OCI-LY7 (cell line): ENCODE measurements at regions of chrX and their contacts with region 1.

Region 1: GRCh38 chrX:7083468-7084396 is 63.8 kb upstream of the STS start:
- DNase-seq: peak; percentile 90
- H3K4me3 ChIP-seq: peak overlapping the region; percentile 40
- H3K27ac ChIP-seq: peak overlapping the region; percentile 96
- H3K4me1 ChIP-seq: peaks cover 66% of the 10 kb centered on the region
- CTCF ChIP-seq: no peak

Region 2: DNA sequence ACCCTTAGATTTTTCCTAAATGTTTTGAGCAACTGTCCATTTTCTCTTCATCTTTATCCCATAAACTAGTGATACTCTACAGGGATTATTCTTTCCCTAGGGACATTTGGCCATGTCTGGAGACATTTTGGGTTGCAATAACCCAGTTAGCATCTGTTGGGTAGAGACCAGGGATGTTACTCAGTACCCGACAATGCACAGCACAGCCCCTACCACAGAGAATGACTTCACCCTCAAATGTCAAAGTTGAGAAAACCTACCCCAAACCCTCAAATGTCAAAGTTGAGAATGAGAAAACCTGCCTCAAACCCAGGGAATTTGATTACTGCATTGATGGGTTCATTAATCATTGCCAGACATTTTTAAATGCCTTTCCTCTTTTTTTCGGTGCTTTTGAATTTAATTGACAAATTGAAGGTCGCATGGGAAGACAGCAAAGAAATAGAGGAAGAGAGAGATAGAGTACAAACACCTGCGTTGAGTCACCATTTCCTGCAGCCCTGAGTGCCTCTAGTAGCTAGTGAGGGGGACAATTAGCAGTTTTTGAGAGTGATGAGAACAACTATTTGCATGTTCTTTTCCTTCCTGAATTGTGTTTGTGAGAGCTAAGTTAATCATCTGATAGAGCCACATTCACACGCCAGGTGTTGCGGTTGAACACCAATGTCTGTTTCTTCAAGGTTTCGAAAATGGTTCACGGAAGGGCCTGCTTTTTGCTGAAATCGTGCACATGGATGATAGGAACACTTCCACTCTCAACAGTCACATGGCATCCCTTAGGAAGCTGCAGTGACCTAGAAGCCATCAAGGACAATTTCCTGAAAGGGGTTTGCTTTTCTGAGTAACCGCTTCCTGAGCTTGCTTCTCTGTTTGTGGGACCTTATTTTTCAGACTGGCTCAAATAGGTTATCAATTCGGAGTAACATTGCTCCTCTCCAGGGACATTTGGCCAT is 344.9 kb before region 1 on chrX:
- CTCF ChIA-PET with region 1: no interaction called
- POLR2A ChIA-PET with region 1: no interaction called
- intact Hi-C with region 1: loop called (anchors 1 kb)
- DNase-seq: peak; percentile 88
- H3K4me3 ChIP-seq: peak overlapping the region; percentile 38
- H3K27ac ChIP-seq: peak overlapping the region; percentile 82
- H3K4me1 ChIP-seq: peaks cover 37% of the 10 kb centered on the region
- CTCF ChIP-seq: no peak

Region 3: GRCh38 chrX:6849716-6850414 is 233.9 kb before region 1 on chrX:
- CTCF ChIA-PET with region 1: no interaction called
- POLR2A ChIA-PET with region 1: no interaction called
- intact Hi-C with region 1: loop called (anchors 10 kb)
- DNase-seq: no peak
- H3K4me3 ChIP-seq: no peak overlapping the region
- H3K27ac ChIP-seq: no peak overlapping the region
- H3K4me1 ChIP-seq: peaks cover 33% of the 10 kb centered on the region
- CTCF ChIP-seq: no peak

Region 4: DNA sequence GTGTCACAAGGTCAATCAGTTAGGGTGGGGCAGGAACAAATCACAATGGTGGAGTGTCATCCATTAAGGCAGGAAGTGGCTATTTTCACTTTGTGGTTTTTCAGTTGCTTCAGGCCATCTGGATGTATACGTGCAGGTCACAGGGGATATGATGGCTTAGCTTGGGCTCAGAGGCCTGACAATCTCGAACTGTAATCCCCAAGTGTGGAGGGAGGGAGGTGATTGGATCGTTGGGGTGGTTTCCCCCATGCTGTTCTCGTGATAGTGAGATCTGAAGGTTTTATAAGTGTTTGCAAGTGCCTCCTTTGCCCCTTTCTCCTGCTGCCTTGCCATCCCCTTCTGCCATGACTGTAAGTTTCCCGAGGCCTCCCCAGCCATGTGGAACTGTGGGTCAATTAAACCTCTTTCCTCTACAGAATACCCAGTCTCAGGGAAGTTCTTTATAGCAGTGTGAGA is 27.1 kb after region 1 on chrX:
- CTCF ChIA-PET with region 1: no interaction called
- POLR2A ChIA-PET with region 1: interaction called, 4 read pairs
- intact Hi-C with region 1: loop called (anchors 1 kb)
- DNase-seq: peak; percentile 88
- H3K4me3 ChIP-seq: peak overlapping the region; percentile 58
- H3K27ac ChIP-seq: peak overlapping the region; percentile 100
- H3K4me1 ChIP-seq: peaks cover 93% of the 10 kb centered on the region
- CTCF ChIP-seq: no peak

Region 5: GRCh38 chrX:7147978-7148824 is 64.5 kb after region 1 on chrX and contains the start of gene PUDP:
- CTCF ChIA-PET with region 1: interaction called, 3 read pairs
- POLR2A ChIA-PET with region 1: interaction called, 3 read pairs
- intact Hi-C with region 1: loop called (anchors 2 kb)
- DNase-seq: peak; percentile 87
- H3K4me3 ChIP-seq: peak within 1 kb of the TSS; percentile 95
- H3K27ac ChIP-seq: peak within 1 kb of the TSS; percentile 87
- H3K4me1 ChIP-seq: peaks cover 33% of the 10 kb centered on the region
- CTCF ChIP-seq: peak; percentile 41
- total RNA-seq, gene PUDP: 8.8 and 21.1 TPM in 2 replicates

Region 6: DNA sequence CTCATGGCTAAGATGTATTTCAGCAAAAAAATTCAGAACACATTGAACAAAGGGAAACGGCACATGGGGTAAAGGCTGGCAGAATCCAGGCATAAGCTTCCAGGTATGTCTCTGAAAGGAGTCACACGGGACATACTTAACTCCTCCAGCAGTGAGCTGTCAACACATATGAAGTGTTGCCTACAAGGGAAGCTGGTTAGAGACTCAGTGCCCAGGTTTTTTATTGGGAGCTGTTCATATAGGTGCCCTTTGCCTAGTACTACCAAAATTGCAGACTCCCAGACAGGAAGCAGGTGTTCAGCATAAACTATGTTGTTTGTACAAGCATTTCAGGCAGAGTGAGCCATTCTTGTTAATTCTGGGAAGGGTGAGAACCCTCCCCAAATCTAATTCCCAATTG is 141.6 kb after region 1 on chrX:
- CTCF ChIA-PET with region 1: no interaction called
- POLR2A ChIA-PET with region 1: no interaction called
- intact Hi-C with region 1: loop called (anchors 10 kb)
- DNase-seq: no peak
- H3K4me3 ChIP-seq: peak overlapping the region; percentile 85
- H3K27ac ChIP-seq: peak overlapping the region; percentile 90
- H3K4me1 ChIP-seq: peaks cover 85% of the 10 kb centered on the region
- CTCF ChIP-seq: no peak

Region 7: GRCh38 chrX:7889680-7890079 is 805.9 kb after region 1 on chrX:
- CTCF ChIA-PET with region 1: no interaction called
- POLR2A ChIA-PET with region 1: no interaction called
- intact Hi-C with region 1: no loop called
- DNase-seq: no peak
- H3K4me3 ChIP-seq: no peak overlapping the region
- H3K27ac ChIP-seq: no peak overlapping the region
- H3K4me1 ChIP-seq: no peaks in the 10 kb centered on the region
- CTCF ChIP-seq: no peak